ENCODE measurements at regions of chr5 and their contacts with region 1.

Region 1: DNA sequence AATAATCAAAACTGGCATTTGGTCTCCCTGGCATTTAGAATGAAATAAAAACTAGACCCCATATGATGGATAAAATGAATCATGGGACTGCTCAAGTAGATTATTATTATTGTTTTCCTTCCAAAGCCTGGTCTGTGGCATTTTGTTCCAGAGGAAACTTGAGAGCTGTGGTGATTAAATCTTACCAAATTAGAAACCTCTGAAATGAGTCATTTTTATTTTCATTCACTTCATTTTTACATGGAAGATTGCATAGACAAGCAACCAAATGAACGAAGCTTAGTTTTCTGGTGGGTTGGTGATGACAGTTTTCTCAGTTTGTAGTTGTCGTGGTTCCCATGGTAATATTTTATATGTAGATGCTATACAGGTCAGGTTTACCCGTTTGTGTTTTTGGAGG is 23.4 kb downstream of the PAM start:
- DNase-seq: no peak
- ATAC-seq: no peak
- H3K4me3 ChIP-seq: no peak overlapping the region
- H3K27ac ChIP-seq: no peak overlapping the region
- H3K4me1 ChIP-seq: no peaks in the 10 kb centered on the region
- H3K27me3 ChIP-seq: no peaks in the 10 kb centered on the region
- CTCF ChIP-seq: no peak
- EP300 ChIP-seq: no peak
- POLR2A ChIP-seq: no peak
- RAD21 ChIP-seq: no peak

Region 2: DNA sequence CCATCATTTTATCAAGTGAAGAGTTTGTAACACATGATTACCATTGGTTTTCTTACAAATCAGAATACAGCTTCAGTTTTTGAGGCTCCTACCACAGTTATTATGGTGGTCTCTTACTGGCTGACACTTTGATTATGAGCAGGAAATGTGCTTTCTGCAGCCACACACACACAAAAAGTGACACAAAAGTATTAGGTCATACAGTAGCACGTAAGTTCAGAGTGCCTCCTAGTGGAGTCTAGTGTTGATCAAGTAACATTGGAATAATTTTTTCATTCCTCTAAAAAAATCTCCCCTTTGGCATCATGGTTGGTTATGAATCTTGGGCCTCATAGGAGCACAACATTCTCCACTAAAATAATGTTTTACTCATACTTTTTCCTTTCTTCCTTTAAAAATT is 14.2 kb after region 1 on chr5:
- CTCF ChIA-PET with region 1: no interaction called
- POLR2A ChIA-PET with region 1: no interaction called
- in situ Hi-C with region 1: no loop called
- intact Hi-C with region 1: no loop called
- DNase-seq: peak; percentile 12
- ATAC-seq: no peak
- H3K4me3 ChIP-seq: no peak overlapping the region
- H3K27ac ChIP-seq: no peak overlapping the region
- H3K4me1 ChIP-seq: peaks cover 48% of the 10 kb centered on the region
- H3K27me3 ChIP-seq: no peaks in the 10 kb centered on the region
- CTCF ChIP-seq: peak; percentile 36
- EP300 ChIP-seq: no peak
- POLR2A ChIP-seq: no peak
- RAD21 ChIP-seq: no peak

Region 3: DNA sequence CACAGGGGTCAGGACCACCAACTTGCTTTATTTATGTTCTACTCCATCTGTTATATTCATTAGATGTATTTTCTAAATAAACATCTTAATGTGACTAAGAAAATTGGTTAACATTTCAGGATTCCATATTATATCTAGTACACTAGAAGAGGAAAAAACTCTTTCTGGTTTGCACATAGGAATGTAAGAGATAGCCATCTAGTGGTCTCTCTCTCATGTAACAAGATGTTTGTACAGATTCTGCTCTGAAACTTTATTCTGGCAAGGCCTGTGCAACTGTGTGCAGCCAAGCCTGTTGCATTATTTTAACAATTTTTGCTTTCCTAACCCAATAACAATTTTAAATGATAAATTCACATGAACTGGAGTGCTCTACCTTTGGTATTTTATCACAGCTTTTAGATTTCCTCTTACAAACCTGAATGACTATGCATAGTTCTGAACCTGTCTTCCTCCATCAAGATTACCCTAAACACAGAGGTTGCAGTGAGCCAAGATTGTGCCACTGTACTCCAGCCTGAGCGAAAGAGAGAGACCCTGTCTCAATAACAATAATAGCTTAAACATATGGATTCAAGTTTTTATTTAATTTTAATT is 193.3 kb after region 1 on chr5:
- CTCF ChIA-PET with region 1: interaction called, 3 read pairs
- POLR2A ChIA-PET with region 1: no interaction called
- in situ Hi-C with region 1: no loop called
- intact Hi-C with region 1: loop called (anchors 1 kb)
- DNase-seq: peak; percentile 1
- ATAC-seq: peak; percentile 65
- H3K4me3 ChIP-seq: no peak overlapping the region
- H3K27ac ChIP-seq: no peak overlapping the region
- H3K4me1 ChIP-seq: no peaks in the 10 kb centered on the region
- H3K27me3 ChIP-seq: no peaks in the 10 kb centered on the region
- CTCF ChIP-seq: peak; percentile 41; the same call in 1 of the 2 replicates
- EP300 ChIP-seq: no peak
- POLR2A ChIP-seq: no peak
- RAD21 ChIP-seq: no peak

Region 4: DNA sequence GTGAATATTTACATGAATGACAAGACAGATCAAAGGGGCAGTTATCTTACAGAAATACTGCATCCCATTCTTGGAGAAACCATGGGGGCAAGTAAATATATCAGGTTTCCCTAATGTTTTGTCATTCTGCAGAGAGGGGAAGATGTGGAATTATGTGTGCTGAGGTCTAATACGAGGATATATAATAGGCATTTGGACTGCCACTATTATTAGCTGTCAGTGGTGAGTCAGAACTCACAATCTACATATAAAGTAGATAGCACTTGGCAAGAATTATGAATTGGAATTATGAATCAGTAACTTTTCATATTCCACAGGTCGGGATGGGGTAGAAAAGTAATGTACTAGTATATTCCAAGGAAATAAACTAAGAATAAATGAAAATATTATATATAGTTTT is 219.7 kb after region 1 on chr5:
- CTCF ChIA-PET with region 1: no interaction called
- POLR2A ChIA-PET with region 1: no interaction called
- in situ Hi-C with region 1: no loop called
- intact Hi-C with region 1: no loop called
- DNase-seq: no peak
- ATAC-seq: no peak
- H3K4me3 ChIP-seq: no peak overlapping the region
- H3K27ac ChIP-seq: no peak overlapping the region
- H3K4me1 ChIP-seq: peaks cover 8% of the 10 kb centered on the region
- H3K27me3 ChIP-seq: no peaks in the 10 kb centered on the region
- CTCF ChIP-seq: no peak
- EP300 ChIP-seq: no peak
- POLR2A ChIP-seq: no peak
- RAD21 ChIP-seq: no peak

Region 5: GRCh38 chr5:103132684-103133083 is 354.2 kb after region 1 on chr5:
- CTCF ChIA-PET with region 1: no interaction called
- POLR2A ChIA-PET with region 1: no interaction called
- in situ Hi-C with region 1: loop called (anchors 10 kb)
- intact Hi-C with region 1: loop called (anchors 2 kb)
- DNase-seq: no peak
- ATAC-seq: no peak
- H3K4me3 ChIP-seq: no peak overlapping the region
- H3K27ac ChIP-seq: no peak overlapping the region
- H3K4me1 ChIP-seq: no peaks in the 10 kb centered on the region
- H3K27me3 ChIP-seq: no peaks in the 10 kb centered on the region
- CTCF ChIP-seq: no peak
- EP300 ChIP-seq: no peak
- POLR2A ChIP-seq: no peak
- RAD21 ChIP-seq: no peak

Region 6: GRCh38 chr5:103224118-103224893 is 445.8 kb after region 1 on chr5:
- CTCF ChIA-PET with region 1: no interaction called
- POLR2A ChIA-PET with region 1: no interaction called
- in situ Hi-C with region 1: no loop called
- intact Hi-C with region 1: loop called (anchors 5 kb)
- DNase-seq: peak; percentile 60
- ATAC-seq: peak; percentile 96
- H3K4me3 ChIP-seq: peak overlapping the region in 2 of 3 experiments; percentile 14 to 39; a peak in 2 of 6 replicates
- H3K27ac ChIP-seq: no peak overlapping the region
- H3K4me1 ChIP-seq: peaks cover 6% of the 10 kb centered on the region; the same call in 1 of the 2 replicates
- H3K27me3 ChIP-seq: no peaks in the 10 kb centered on the region
- CTCF ChIP-seq: peak; percentile 80
- EP300 ChIP-seq: no peak
- POLR2A ChIP-seq: no peak
- RAD21 ChIP-seq: peak; percentile 44; the same call in 1 of the 2 replicates

Region 7: GRCh38 chr5:104139840-104140239 is 1361.4 kb after region 1 on chr5:
- CTCF ChIA-PET with region 1: no interaction called
- POLR2A ChIA-PET with region 1: no interaction called
- in situ Hi-C with region 1: no loop called
- intact Hi-C with region 1: no loop called
- DNase-seq: no peak
- ATAC-seq: no peak
- H3K4me3 ChIP-seq: no peak overlapping the region
- H3K27ac ChIP-seq: no peak overlapping the region
- H3K4me1 ChIP-seq: no peaks in the 10 kb centered on the region
- H3K27me3 ChIP-seq: no peaks in the 10 kb centered on the region
- CTCF ChIP-seq: no peak
- EP300 ChIP-seq: no peak
- POLR2A ChIP-seq: no peak
- RAD21 ChIP-seq: no peak